ENCODE measurements at regions of chr14 and their contacts with region 1.

Region 1: DNA sequence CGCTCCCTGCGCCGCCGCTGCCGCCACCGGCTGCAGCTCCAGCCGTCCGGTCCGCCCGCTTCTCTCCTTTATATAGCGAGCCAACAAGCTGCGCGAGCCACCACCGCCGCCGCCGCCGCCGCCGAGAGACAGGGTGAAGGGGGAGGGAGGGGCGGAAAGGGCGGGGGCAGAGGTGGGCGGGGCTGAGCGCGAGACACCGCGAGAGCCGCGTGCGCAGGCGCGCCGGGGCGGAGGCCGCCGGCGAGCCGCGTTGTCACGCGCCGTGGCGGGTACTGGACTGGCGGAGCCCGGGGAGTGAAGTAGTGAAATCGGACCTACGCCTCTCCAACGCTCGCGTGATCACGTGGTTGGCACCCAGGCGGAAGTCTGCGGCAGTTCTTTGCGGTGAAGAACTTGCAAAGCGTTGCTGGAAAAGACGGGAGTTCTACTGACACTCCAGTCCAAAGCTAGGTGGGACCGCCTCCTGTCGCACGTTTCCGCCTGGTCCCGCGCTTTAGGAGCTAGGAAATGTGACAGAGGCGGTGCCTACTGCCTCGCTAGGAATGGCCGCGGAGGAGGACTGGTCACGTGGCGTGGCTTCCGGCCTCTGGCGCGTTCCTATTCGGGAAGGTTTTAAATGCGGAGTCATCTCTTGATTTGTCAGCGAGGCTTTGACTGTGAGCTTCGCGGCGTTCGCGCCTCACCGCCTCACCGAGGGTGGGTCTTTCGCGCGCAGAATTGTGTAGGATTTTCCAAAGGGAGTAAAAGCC is at the start of gene GTF2A1:
- DNase-seq: peak; percentile 96
- H3K4me3 Mint-ChIP-seq: peak within 1 kb of the TSS; percentile 96
- H3K27ac Mint-ChIP-seq: peak within 1 kb of the TSS; percentile 97
- H3K4me1 Mint-ChIP-seq: peaks cover 34% of the 10 kb centered on the region
- H3K27me3 Mint-ChIP-seq: peaks cover 2% of the 10 kb centered on the region
- total RNA-seq, gene GTF2A1: 38.9 to 40.1 TPM

Region 2: DNA sequence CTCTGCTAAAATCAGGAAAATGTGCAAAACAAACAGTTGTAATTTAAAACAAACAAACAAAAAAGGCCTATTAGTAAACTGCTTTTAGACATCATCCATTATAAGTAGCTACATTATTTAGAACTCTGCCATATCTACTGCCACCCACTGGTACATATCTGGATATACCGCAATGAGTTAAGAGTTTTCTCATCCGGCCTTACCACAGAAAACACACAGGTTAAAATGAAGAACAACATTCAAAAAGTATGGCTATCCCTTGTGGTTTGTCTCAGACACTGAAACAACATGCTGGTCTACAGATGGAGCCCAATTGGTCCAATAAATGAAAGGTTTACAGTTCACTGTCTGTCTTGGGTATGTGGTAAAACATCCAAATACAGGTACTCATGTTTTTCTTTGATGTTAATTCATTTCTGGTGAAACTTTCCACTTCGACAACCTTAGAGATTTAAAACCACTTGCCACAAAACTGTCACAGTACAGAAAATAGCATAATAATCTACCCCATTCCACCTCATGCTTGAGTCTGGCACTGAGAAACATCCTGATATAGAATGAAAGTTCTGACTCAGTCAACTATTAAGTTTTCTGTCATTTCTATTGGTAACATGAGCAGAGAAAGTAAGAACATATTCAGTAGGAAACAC is 633.8 kb before region 1 on chr14:
- CTCF ChIA-PET with region 1: no interaction called
- POLR2A ChIA-PET with region 1: no interaction called
- intact Hi-C with region 1: loop called (anchors 1 kb)
- DNase-seq: no peak
- H3K4me3 Mint-ChIP-seq: no peak overlapping the region
- H3K27ac Mint-ChIP-seq: peak overlapping the region; percentile 67
- H3K4me1 Mint-ChIP-seq: peaks cover 17% of the 10 kb centered on the region
- H3K27me3 Mint-ChIP-seq: no peaks in the 10 kb centered on the region

Region 3: DNA sequence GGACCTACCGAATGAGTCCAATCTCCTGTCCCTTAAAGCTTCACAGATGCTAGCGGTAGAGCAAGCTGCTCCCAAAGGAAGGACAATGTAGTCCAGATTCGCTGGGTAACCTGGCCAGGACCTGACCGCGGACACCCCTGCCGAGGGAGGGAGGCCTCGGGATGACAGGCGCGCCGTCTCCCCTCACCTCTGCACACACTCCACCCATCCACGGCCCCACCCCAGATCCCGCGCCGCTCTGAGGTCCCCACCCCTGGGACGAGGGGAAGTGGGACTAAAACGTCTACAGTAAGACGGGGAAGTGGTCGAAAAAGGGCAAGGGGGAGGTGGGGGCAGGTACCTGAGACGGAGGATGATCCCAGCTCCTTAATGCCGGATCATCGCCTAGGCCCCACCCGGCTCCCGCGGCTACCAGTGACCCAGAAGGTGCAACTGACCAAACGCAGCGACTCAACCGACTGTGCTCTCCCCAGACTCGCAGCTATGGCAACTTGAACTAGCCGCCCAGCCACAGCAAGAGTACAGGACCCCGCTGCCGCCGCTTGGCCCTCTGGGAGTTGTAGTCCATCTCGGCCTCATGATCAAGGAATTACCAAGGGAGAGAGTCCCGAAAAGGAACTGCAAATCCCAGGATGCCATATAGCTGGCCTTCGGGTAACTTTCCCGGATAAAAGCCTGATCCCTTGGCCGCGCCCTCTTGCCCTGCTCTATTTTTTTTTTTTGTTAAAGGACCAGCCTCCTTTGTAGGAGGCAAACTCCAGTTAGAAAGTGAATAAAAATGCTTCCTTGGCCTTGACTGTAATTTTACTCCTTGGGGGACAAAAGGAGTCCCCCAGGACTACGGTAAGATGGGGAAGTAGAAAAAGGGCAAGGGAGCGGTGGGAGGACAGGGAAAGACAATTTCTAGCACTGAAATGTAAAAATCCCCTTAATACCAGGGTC is 279.5 kb before region 1 on chr14 and contains the start of gene CEP128:
- CTCF ChIA-PET with region 1: no interaction called
- POLR2A ChIA-PET with region 1: interaction called, 3 read pairs
- intact Hi-C with region 1: loop called (anchors 2 kb)
- DNase-seq: peak; percentile 92
- H3K4me3 Mint-ChIP-seq: peak within 1 kb of the TSS; percentile 88
- H3K27ac Mint-ChIP-seq: peak within 1 kb of the TSS; percentile 93
- H3K4me1 Mint-ChIP-seq: peaks cover 37% of the 10 kb centered on the region
- H3K27me3 Mint-ChIP-seq: no peaks in the 10 kb centered on the region
- total RNA-seq, gene CEP128: 19.4 to 22.8 TPM

Region 4: DNA sequence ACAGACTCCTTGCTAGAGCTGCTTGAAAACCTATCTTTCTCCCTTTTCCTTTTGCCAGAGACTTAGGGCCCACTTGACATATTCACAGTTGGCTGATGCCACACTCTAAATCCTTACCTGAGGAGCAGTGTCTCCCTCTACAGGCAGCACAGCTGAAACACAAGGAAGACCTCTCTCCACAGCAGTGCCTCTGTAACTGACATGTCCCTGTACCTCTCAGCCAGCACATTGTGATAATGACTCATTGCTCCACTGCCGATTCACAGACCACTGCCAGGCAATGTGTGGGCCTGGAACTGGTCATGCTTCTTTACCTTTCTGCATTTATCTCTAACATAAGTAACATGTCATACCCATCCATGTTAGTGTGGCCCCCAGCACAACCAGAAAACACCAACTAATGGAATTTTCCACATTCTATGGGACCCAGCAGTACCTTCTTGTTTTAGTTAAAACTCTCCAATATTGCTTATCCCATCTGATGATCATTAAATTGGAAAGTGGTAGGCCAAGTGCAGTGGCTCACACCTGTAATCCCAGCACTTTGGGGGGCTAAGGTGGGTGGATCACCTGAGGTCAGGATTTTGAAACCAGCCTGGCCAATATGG is 56.7 kb before region 1 on chr14:
- CTCF ChIA-PET with region 1: interaction called, 3 read pairs
- POLR2A ChIA-PET with region 1: interaction called, 7 read pairs
- intact Hi-C with region 1: loop called (anchors 1 kb)
- DNase-seq: peak; percentile 83
- H3K4me3 Mint-ChIP-seq: no peak overlapping the region
- H3K27ac Mint-ChIP-seq: no peak overlapping the region
- H3K4me1 Mint-ChIP-seq: peaks cover 10% of the 10 kb centered on the region
- H3K27me3 Mint-ChIP-seq: no peaks in the 10 kb centered on the region

Region 5: GRCh38 chr14:81193924-81194633 is 26.9 kb before region 1 on chr14:
- CTCF ChIA-PET with region 1: no interaction called
- POLR2A ChIA-PET with region 1: interaction called, 4 read pairs
- intact Hi-C with region 1: loop called (anchors 1 kb)
- DNase-seq: peak; percentile 61
- H3K4me3 Mint-ChIP-seq: no peak overlapping the region
- H3K27ac Mint-ChIP-seq: no peak overlapping the region
- H3K4me1 Mint-ChIP-seq: peaks cover 41% of the 10 kb centered on the region
- H3K27me3 Mint-ChIP-seq: no peaks in the 10 kb centered on the region

Region 6: GRCh38 chr14:81464247-81465002 is 243.4 kb after region 1 on chr14:
- CTCF ChIA-PET with region 1: no interaction called
- POLR2A ChIA-PET with region 1: no interaction called
- intact Hi-C with region 1: loop called (anchors 2 kb)
- DNase-seq: peak; percentile 52
- H3K4me3 Mint-ChIP-seq: peak overlapping the region; percentile 73
- H3K27ac Mint-ChIP-seq: peak overlapping the region; percentile 63
- H3K4me1 Mint-ChIP-seq: peaks cover 3% of the 10 kb centered on the region
- H3K27me3 Mint-ChIP-seq: peaks cover 1% of the 10 kb centered on the region

Region 7: GRCh38 chr14:81533536-81534343 is 312.7 kb after region 1 on chr14 and contains the start of gene SEL1L:
- CTCF ChIA-PET with region 1: no interaction called
- POLR2A ChIA-PET with region 1: no interaction called
- intact Hi-C with region 1: loop called (anchors 1 kb)
- DNase-seq: peak; percentile 100
- H3K4me3 Mint-ChIP-seq: peak within 1 kb of the TSS; percentile 90
- H3K27ac Mint-ChIP-seq: peak within 1 kb of the TSS; percentile 75
- H3K4me1 Mint-ChIP-seq: peaks cover 59% of the 10 kb centered on the region
- H3K27me3 Mint-ChIP-seq: no peaks in the 10 kb centered on the region
- total RNA-seq, gene SEL1L: 49.0 to 50.2 TPM